Mammary epithelial cell (primary cell): ENCODE measurements at regions of chr17 and their contacts with region 1.

Region 1: DNA sequence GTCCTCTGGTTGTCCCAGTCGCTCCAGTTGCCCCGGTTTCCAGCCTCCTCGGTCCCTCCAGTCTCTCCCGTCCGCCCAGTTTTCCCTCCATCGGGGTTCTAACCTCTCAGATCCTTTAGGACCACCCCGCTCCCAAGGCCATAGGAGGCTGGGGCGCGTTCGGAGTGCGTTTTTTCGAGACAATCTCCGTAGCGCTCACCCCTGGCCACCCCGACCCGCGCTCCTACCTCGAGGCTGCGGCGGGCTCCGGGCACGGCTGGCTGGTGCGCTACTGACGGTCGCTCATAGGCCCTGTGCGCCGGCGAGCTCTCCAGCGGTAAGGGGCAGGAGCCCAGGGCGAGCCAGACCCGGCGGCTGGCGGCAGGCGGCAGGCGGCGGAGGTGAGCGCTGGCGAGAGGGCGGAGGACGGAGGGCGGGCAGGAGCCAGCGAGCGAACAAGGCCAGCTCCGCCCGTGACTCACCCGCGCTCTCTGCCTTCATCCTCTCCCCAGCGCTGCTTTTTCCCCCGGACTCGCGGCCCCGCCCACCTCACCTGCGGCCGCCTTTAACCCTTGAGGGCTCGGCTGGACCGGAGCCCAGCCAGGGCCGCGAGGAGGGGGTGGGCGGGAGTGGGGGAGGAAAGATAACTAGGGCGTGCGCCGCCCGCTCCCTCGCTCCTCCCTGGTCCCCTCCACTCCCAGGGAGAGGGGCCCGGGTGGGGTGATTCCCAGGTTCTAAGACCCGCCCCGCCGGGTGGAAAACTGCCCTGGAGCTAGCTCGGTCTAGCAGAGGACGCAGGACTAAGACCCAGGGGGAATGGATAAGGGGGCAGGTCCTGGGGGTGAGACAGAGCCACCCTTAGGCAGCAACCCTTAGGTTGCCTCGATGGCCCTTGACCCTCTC is at the start of gene SP6:
- DNase-seq: peak; percentile 92
- H3K4me3 ChIP-seq: peak within 1 kb of the TSS; percentile 66 to 89 (median 70)
- H3K27ac ChIP-seq: peak within 1 kb of the TSS; percentile 64
- H3K4me1 ChIP-seq: peaks cover 34% of the 10 kb centered on the region
- H3K27me3 ChIP-seq: peaks cover 3% of the 10 kb centered on the region
- CTCF ChIP-seq: peak in 1 of 2 donors; percentile 45
- total RNA-seq, gene SP6: 4.2 to 15.1 TPM

Region 2: GRCh38 chr17:47663912-47664625 is 186.9 kb before region 1 on chr17:
- CTCF ChIA-PET with region 1: no interaction called
- dilution Hi-C with region 1: no loop called
- in situ Hi-C with region 1: no loop called
- intact Hi-C with region 1: no loop called
- DNase-seq: peak; percentile 34
- H3K4me3 ChIP-seq: no peak overlapping the region
- H3K27ac ChIP-seq: no peak overlapping the region
- H3K4me1 ChIP-seq: no peaks in the 10 kb centered on the region
- H3K27me3 ChIP-seq: no peaks in the 10 kb centered on the region
- CTCF ChIP-seq: peak; percentile 71 to 80

Region 3: GRCh38 chr17:47862621-47863440 is 11.9 kb after region 1 on chr17:
- CTCF ChIA-PET with region 1: interaction called, 5 read pairs
- dilution Hi-C with region 1: no loop called
- in situ Hi-C with region 1: no loop called
- intact Hi-C with region 1: loop called (anchors 1 kb)
- DNase-seq: peak; percentile 78
- H3K4me3 ChIP-seq: no peak overlapping the region
- H3K27ac ChIP-seq: peak overlapping the region; percentile 55
- H3K4me1 ChIP-seq: peaks cover 36% of the 10 kb centered on the region
- H3K27me3 ChIP-seq: no peaks in the 10 kb centered on the region
- CTCF ChIP-seq: no peak